ENCODE measurements at regions of chr1 and their contacts with region 1.

Region 1: GRCh38 chr1:182889997-182890396 is 50.9 kb downstream of the DHX9 start:
- DNase-seq: no peak
- ATAC-seq: peak; percentile 41
- H3K4me3 ChIP-seq: no peak overlapping the region
- H3K27ac ChIP-seq: no peak overlapping the region
- H3K4me1 ChIP-seq: no peaks in the 10 kb centered on the region
- H3K27me3 ChIP-seq: no peaks in the 10 kb centered on the region
- CTCF ChIP-seq: no peak
- EP300 ChIP-seq: no peak
- POLR2A ChIP-seq: peak; percentile 43; the same call in 1 of the 2 replicates
- RAD21 ChIP-seq: no peak

Region 2: DNA sequence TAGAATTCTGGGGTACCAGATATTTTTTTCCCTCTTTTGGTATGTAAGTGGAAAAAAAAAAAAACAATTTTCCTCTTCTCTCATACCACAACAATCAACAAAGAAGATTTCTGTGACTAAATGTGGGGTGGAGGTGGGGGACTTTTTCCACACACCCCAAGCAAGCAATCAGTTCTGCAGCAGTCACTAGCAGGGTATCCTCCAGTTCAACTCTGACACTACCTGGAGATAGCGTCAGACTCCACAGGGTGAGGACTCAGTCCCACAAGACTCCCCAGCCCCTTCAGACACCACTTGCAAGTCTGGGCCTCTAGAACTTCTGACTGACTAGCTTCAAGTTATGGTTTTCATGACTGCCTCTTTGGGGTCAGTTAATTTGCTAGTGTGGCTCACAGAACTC is 44.6 kb before region 1 on chr1:
- CTCF ChIA-PET with region 1: no interaction called
- POLR2A ChIA-PET with region 1: no interaction called
- RAD21 ChIA-PET with region 1: no interaction called
- SMC1A ChIA-PET with region 1: no interaction called
- in situ Hi-C with region 1: loop called (anchors 5 kb)
- intact Hi-C with region 1: loop called (anchors 5 kb)
- DNase-seq: no peak
- ATAC-seq: peak; percentile 8
- H3K4me3 ChIP-seq: no peak overlapping the region
- H3K27ac ChIP-seq: no peak overlapping the region
- H3K4me1 ChIP-seq: peaks cover 15% of the 10 kb centered on the region
- H3K27me3 ChIP-seq: no peaks in the 10 kb centered on the region
- CTCF ChIP-seq: no peak
- EP300 ChIP-seq: no peak
- POLR2A ChIP-seq: no peak
- RAD21 ChIP-seq: no peak

Region 3: GRCh38 chr1:182851825-182852224 is 38.2 kb before region 1 on chr1:
- CTCF ChIA-PET with region 1: no interaction called
- POLR2A ChIA-PET with region 1: interaction called, 3 read pairs
- RAD21 ChIA-PET with region 1: no interaction called
- SMC1A ChIA-PET with region 1: interaction called, 4 read pairs
- in situ Hi-C with region 1: loop called (anchors 5 kb)
- intact Hi-C with region 1: loop called (anchors 5 kb)
- DNase-seq: no peak
- ATAC-seq: peak; percentile 25; the same call in 2 of the 3 replicates
- H3K4me3 ChIP-seq: no peak overlapping the region
- H3K27ac ChIP-seq: no peak overlapping the region
- H3K4me1 ChIP-seq: peaks cover 8% of the 10 kb centered on the region
- H3K27me3 ChIP-seq: no peaks in the 10 kb centered on the region
- CTCF ChIP-seq: no peak
- EP300 ChIP-seq: no peak
- POLR2A ChIP-seq: no peak
- RAD21 ChIP-seq: no peak

Region 4: DNA sequence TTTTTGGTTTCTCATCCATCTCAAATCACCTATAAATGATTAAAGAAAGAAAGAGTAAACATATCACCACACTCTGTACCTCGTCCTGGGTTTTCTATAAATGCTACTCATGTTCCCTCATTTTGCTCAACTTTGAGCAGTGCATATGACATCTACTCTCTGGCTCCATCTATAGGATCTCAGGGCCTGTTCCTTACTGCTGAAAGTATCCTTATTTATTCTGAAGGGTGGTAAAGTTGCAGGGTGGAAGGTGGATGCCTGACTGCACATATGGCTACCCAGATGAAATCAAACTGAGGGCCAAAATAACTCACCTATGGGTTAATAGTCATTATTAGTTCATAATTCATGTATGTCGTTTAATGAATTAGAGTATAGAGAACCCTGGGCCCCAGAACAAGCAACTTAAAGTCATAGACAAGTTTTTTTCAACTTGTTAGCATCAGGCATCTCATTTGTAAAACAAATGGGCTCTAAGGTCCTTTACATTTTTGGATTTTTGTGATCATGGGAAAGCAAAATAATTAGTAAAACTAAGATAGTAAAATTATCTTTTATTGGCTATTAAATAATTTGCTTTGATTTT is 653.7 kb after region 1 on chr1:
- CTCF ChIA-PET with region 1: no interaction called
- POLR2A ChIA-PET with region 1: no interaction called
- RAD21 ChIA-PET with region 1: no interaction called
- SMC1A ChIA-PET with region 1: no interaction called
- in situ Hi-C with region 1: loop called (anchors 10 kb)
- intact Hi-C with region 1: no loop called
- DNase-seq: peak; percentile 19
- ATAC-seq: peak; percentile 95
- H3K4me3 ChIP-seq: no peak overlapping the region
- H3K27ac ChIP-seq: no peak overlapping the region
- H3K4me1 ChIP-seq: no peaks in the 10 kb centered on the region
- H3K27me3 ChIP-seq: no peaks in the 10 kb centered on the region
- CTCF ChIP-seq: peak; percentile 65 to 66 (median 65)
- EP300 ChIP-seq: no peak
- POLR2A ChIP-seq: no peak
- RAD21 ChIP-seq: peak; percentile 71

Measured in GM12878 (cell line).